ENCODE measurements at regions of chr1 and their contacts with region 1.

Region 1: DNA sequence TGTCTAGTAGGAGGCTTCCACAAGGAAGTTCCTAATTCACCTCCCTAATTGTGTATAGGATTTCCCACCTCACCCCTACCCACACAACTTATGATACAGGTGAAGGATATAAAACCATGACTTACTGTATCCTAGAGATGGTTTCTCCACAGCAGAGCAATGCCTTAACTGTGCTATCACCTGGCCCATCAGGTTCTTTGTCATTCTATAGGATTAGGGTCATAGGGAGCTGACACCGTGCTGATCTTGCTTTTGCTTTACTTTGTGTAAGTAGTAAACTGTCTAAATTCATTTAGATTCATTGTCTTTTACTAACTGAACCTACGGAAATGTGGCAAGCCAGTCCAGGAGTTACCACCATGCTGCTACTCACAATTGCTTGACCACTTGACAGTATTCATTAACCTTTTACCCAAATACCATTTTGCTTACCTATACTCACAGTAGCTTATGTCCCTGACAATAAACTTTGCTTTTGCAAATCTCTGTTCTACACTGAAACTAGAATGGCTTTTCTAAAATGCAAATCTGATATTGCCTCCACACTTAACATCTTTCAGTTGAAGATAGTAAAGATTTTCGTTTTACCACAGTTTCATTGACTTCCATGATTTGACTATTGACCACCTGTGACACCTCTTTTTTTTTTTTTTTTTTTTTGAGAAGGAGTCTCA is 147.6 kb downstream of the IFI44 start:
- DNase-seq: no peak
- ATAC-seq: no peak
- H3K4me3 ChIP-seq: no peak overlapping the region
- H3K4me3 Mint-ChIP-seq: no peak overlapping the region
- H3K27ac ChIP-seq: no peak overlapping the region
- H3K27ac Mint-ChIP-seq: no peak overlapping the region
- H3K4me1 ChIP-seq: no peaks in the 10 kb centered on the region
- H3K4me1 Mint-ChIP-seq: no peaks in the 10 kb centered on the region
- H3K27me3 ChIP-seq: no peaks in the 10 kb centered on the region
- H3K27me3 Mint-ChIP-seq: no peaks in the 10 kb centered on the region
- CTCF ChIP-seq: no peak

Region 2: DNA sequence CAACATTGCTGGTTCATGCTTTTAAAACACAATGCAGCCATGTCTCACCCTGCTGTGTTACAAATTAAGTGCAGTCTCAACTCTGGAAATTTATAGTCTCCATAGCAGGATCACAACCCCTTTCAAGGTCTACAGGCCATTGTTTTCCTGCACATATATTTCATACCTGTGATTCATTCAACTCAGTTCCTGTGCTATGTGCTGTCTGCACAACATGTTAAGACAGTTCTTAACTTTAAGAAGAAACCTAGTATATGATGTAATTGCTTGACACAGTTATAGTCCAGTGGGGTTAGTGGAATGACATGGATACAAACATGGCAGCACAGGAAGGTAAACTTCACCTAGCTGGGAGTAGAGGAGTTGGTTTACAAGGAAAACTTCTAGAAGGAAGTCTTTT is 41.3 kb before region 1 on chr1:
- CTCF ChIA-PET with region 1: no interaction called
- POLR2A ChIA-PET with region 1: no interaction called
- intact Hi-C with region 1: loop called in 1 of 2 experiments (anchors 2 kb)
- DNase-seq: no peak
- ATAC-seq: no peak
- H3K4me3 ChIP-seq: no peak overlapping the region
- H3K4me3 Mint-ChIP-seq: no peak overlapping the region
- H3K27ac ChIP-seq: no peak overlapping the region
- H3K27ac Mint-ChIP-seq: no peak overlapping the region
- H3K4me1 ChIP-seq: no peaks in the 10 kb centered on the region
- H3K4me1 Mint-ChIP-seq: no peaks in the 10 kb centered on the region
- H3K27me3 ChIP-seq: no peaks in the 10 kb centered on the region
- H3K27me3 Mint-ChIP-seq: peaks cover 2% of the 10 kb centered on the region
- CTCF ChIP-seq: no peak